Dorsolateral prefrontal cortex (tissue), 120 donors: ENCODE measurements at regions of chr9 and their contacts with region 1.

Region 1: DNA sequence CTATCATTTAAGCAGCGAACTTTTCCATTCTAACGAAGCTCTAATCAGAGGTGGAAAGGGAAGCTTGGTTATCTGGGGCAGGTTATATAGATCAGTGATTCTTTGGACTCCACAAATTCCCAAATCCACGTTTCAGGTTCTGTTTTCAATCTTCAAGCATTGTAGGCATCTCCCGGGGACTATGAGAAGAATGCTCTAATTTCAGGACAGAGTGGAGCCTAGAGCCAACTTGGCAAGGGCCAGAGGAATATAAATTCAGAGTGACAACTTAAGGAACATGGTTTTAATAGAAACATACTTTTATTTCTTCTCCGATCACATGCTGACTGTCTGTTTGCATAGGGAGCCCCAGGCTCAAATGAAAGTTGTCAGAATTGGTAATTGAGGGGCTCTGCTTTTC is 514.0 kb upstream of the KLF4 start:
- DNase-seq: no peak
- H3K4me3 ChIP-seq: no peak overlapping the region
- H3K27ac ChIP-seq: no peak overlapping the region
- H3K27me3 ChIP-seq: peaks cover 0 to 13% (median 0%) of the 10 kb centered on the region in 45 donors
- CTCF ChIP-seq: no peak

Region 2: GRCh38 chr9:107976765-107977164 is 26.8 kb before region 1 on chr9:
- intact Hi-C with region 1: no loop called
- DNase-seq: no peak
- H3K4me3 ChIP-seq: no peak overlapping the region
- H3K27ac ChIP-seq: no peak overlapping the region
- H3K27me3 ChIP-seq: peaks cover 0 to 3% (median 0%) of the 10 kb centered on the region in 45 donors
- CTCF ChIP-seq: no peak

Region 3: DNA sequence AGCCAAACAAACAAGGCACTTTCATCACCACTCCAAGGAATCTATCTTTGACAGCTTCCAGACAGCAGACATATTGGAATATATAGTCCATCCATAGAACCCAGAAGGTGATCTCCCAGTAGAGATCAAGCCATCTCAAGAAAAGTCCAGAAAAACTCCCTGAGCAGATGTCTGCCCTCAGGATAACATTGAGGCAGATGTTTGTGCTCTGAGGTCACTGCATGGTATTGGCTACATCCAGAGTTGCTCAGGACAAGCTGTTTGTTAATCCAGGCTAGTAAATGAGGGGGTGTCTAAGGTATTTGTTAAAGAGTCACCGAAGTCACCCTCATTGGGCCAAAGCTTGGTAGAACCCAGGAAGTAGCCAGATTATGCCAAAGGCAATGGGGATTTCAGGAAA is 42.3 kb after region 1 on chr9:
- intact Hi-C with region 1: loop called in 1 of 2 experiments (anchors 1 kb)
- DNase-seq: no peak
- H3K4me3 ChIP-seq: no peak overlapping the region
- H3K27ac ChIP-seq: no peak overlapping the region
- H3K27me3 ChIP-seq: peaks cover 0 to 4% (median 0%) of the 10 kb centered on the region in 45 donors
- CTCF ChIP-seq: no peak